GM12878 (cell line): ENCODE measurements at regions of chr16 and their contacts with region 1.

Region 1: GRCh38 chr16:67928561-67929364 is 2.9 kb downstream of the CTRL start:
- DNase-seq: no peak
- ATAC-seq: peak; percentile 94
- H3K4me3 ChIP-seq: no peak overlapping the region
- H3K27ac ChIP-seq: no peak overlapping the region
- H3K4me1 ChIP-seq: no peaks in the 10 kb centered on the region; the same call in 1 of the 2 replicates
- H3K27me3 ChIP-seq: no peaks in the 10 kb centered on the region
- CTCF ChIP-seq: peak; percentile 93 to 98 (median 96)
- EP300 ChIP-seq: no peak
- POLR2A ChIP-seq: peak; percentile 77
- RAD21 ChIP-seq: peak; percentile 88

Region 2: GRCh38 chr16:67883872-67884261 is 44.9 kb before region 1 on chr16:
- CTCF ChIA-PET with region 1: interaction called, 15 read pairs
- POLR2A ChIA-PET with region 1: no interaction called
- RAD21 ChIA-PET with region 1: interaction called, 5 read pairs
- SMC1A ChIA-PET with region 1: interaction called, 3 read pairs
- in situ Hi-C with region 1: no loop called
- intact Hi-C with region 1: no loop called
- DNase-seq: no peak
- ATAC-seq: peak; percentile 93
- H3K4me3 ChIP-seq: no peak overlapping the region
- H3K27ac ChIP-seq: no peak overlapping the region
- H3K4me1 ChIP-seq: no peaks in the 10 kb centered on the region
- H3K27me3 ChIP-seq: no peaks in the 10 kb centered on the region
- CTCF ChIP-seq: peak; percentile 86 to 92 (median 90)
- EP300 ChIP-seq: no peak
- POLR2A ChIP-seq: no peak
- RAD21 ChIP-seq: peak; percentile 70

Region 3: GRCh38 chr16:67892899-67893742 is 35.6 kb before region 1 on chr16 and contains the start of gene PSKH1:
- CTCF ChIA-PET with region 1: interaction called, 5 read pairs
- POLR2A ChIA-PET with region 1: interaction called, 4 read pairs
- RAD21 ChIA-PET with region 1: no interaction called
- SMC1A ChIA-PET with region 1: interaction called, 4 read pairs
- in situ Hi-C with region 1: no loop called
- intact Hi-C with region 1: loop called (anchors 5 kb)
- DNase-seq: peak; percentile 74
- ATAC-seq: peak; percentile 98
- H3K4me3 ChIP-seq: peak within 1 kb of the TSS; percentile 83
- H3K27ac ChIP-seq: peak within 1 kb of the TSS; percentile 79
- H3K4me1 ChIP-seq: peaks cover 7% of the 10 kb centered on the region
- H3K27me3 ChIP-seq: no peaks in the 10 kb centered on the region
- CTCF ChIP-seq: no peak
- EP300 ChIP-seq: no peak
- POLR2A ChIP-seq: peak; percentile 84
- RAD21 ChIP-seq: no peak
- polyA plus RNA-seq, gene PSKH1: 0.63 to 1.2 TPM

Region 4: GRCh38 chr16:67968400-67969253 is 39.9 kb after region 1 on chr16 and contains the start of gene SLC12A4:
- CTCF ChIA-PET with region 1: no interaction called
- POLR2A ChIA-PET with region 1: no interaction called
- RAD21 ChIA-PET with region 1: no interaction called
- SMC1A ChIA-PET with region 1: no interaction called
- in situ Hi-C with region 1: no loop called
- intact Hi-C with region 1: no loop called
- DNase-seq: no peak
- ATAC-seq: peak; percentile 88
- H3K4me3 ChIP-seq: peak within 1 kb of the TSS; percentile 96
- H3K27ac ChIP-seq: peak within 1 kb of the TSS; percentile 76
- H3K4me1 ChIP-seq: peaks cover 21% of the 10 kb centered on the region
- H3K27me3 ChIP-seq: no peaks in the 10 kb centered on the region
- CTCF ChIP-seq: no peak
- EP300 ChIP-seq: no peak
- POLR2A ChIP-seq: peak; percentile 76
- RAD21 ChIP-seq: no peak
- polyA plus RNA-seq, gene SLC12A4: 0.95 to 1.7 TPM

Region 5: DNA sequence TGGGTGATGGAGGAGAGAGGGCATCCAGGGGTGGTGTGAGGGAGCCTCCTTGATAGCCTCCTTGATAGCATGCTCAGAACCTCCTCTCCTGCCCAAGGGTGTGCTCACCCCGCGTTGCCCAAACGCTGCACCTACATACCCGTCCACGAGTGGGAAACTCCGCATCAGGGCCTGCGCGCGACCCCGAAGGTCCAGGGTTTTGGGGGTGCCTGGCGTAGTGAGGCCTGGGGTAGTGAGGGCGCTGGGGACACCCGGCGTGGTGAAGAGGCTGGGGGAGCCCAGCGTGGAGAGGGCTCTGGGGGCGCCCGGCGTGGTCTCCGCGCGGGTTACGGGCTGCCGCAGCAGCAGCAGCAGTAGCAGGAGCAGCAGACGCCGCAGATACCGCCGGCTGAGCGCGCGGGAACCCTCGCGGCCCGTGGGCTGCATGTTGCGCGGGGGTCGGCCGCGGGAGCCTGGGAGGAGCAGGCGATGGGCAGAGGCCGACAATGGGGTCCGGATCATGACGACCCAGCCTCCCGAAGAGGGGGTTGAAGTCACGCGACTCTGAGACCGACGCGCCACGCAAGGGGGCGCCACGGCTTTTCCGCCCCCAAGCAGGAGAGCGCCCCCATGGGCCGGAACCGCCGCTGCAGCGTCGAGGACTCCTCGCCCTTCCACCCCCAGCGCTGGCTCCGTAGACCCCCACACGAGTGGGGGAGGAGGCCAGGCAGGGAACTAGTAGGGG is 51.4 kb after region 1 on chr16 and contains the start of gene DPEP3:
- CTCF ChIA-PET with region 1: no interaction called
- POLR2A ChIA-PET with region 1: no interaction called
- RAD21 ChIA-PET with region 1: no interaction called
- SMC1A ChIA-PET with region 1: no interaction called
- in situ Hi-C with region 1: no loop called
- intact Hi-C with region 1: no loop called
- DNase-seq: no peak
- ATAC-seq: no peak
- H3K4me3 ChIP-seq: no peak within 1 kb of the TSS
- H3K27ac ChIP-seq: no peak within 1 kb of the TSS
- H3K4me1 ChIP-seq: peaks cover 28% of the 10 kb centered on the region
- H3K27me3 ChIP-seq: no peaks in the 10 kb centered on the region; a peak in 1 of 4 replicates
- CTCF ChIP-seq: 0 out of 6 replicates have a peak, but pooled peaks of 1 of the 3 experiments have one; percentile 11
- EP300 ChIP-seq: no peak
- POLR2A ChIP-seq: no peak
- RAD21 ChIP-seq: no peak
- polyA plus RNA-seq, gene DPEP3: not detected